H1 (cell line): ENCODE measurements at regions of chr15 and their contacts with region 1.

Region 1: GRCh38 chr15:39686000-39686613 is 96.5 kb downstream of the FSIP1 start:
- DNase-seq: no peak
- H3K4me3 ChIP-seq: no peak overlapping the region
- H3K27ac ChIP-seq: no peak overlapping the region
- H3K4me1 ChIP-seq: no peaks in the 10 kb centered on the region
- H3K27me3 ChIP-seq: no peaks in the 10 kb centered on the region
- CTCF ChIP-seq: peak in 2 of 3 experiments; percentile 69 to 77; a peak in 3 of 4 replicates
- EP300 ChIP-seq: no peak
- POLR2A ChIP-seq: no peak
- RAD21 ChIP-seq: peak; percentile 95

Region 2: GRCh38 chr15:39672666-39673065 is 13.4 kb before region 1 on chr15:
- CTCF ChIA-PET with region 1: interaction called, 11 read pairs
- POLR2A ChIA-PET with region 1: no interaction called
- DNase-seq: no peak
- H3K4me3 ChIP-seq: no peak overlapping the region
- H3K27ac ChIP-seq: no peak overlapping the region
- H3K4me1 ChIP-seq: peaks cover 0 to 2% (median 0%) of the 10 kb centered on the region in 4 experiments; a peak in 2 of 7 replicates
- H3K27me3 ChIP-seq: no peaks in the 10 kb centered on the region
- CTCF ChIP-seq: no peak
- EP300 ChIP-seq: no peak
- POLR2A ChIP-seq: no peak
- RAD21 ChIP-seq: no peak

Region 3: DNA sequence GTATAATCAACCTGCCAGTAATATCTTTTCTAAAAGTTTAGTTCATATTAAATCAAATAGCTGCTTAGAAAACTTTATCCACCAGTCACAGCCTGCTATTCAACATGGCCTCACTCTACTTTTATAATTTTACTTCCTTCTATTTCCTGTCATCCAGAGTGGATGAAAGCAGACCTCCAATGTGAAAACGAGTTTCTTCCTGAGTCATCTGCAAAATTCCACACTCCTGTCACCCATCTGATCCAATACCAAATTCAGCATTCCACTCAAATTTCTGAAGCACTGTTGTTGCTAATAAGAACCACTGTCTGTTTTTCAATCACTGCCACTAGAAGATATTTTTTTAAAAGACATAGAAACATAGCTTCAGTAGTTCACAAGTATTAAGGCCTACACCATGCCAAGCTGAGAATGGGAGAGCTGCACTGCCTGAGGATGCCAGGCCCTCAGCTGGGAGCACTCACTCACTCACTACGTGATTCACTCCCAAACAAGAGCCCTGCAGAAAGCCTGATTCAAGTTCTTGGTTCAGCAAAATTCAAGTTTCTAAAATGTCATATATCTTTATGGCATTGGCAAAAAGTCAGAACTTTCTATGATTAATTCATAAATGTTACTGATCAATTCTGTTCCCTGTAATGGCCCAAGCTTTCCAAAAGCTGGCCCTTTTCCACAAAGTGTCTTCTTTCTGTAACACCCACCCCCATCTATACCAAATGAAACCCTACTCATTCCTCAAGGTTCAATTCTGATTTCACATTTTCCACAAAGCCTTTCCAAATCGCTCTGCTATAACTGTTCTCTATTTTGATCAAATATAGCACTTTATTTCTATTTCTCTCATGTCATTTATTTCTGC is 13.6 kb after region 1 on chr15:
- CTCF ChIA-PET with region 1: interaction called, 17 read pairs
- POLR2A ChIA-PET with region 1: no interaction called
- DNase-seq: no peak
- H3K4me3 ChIP-seq: no peak overlapping the region
- H3K27ac ChIP-seq: no peak overlapping the region
- H3K4me1 ChIP-seq: peaks cover 0 to 4% (median 3%) of the 10 kb centered on the region in 4 experiments; a peak in 3 of 7 replicates
- H3K27me3 ChIP-seq: peaks cover 0 to 1% (median 0%) of the 10 kb centered on the region in 4 experiments; a peak in 1 of 7 replicates
- CTCF ChIP-seq: no peak
- EP300 ChIP-seq: no peak
- POLR2A ChIP-seq: no peak
- RAD21 ChIP-seq: no peak

Region 4: DNA sequence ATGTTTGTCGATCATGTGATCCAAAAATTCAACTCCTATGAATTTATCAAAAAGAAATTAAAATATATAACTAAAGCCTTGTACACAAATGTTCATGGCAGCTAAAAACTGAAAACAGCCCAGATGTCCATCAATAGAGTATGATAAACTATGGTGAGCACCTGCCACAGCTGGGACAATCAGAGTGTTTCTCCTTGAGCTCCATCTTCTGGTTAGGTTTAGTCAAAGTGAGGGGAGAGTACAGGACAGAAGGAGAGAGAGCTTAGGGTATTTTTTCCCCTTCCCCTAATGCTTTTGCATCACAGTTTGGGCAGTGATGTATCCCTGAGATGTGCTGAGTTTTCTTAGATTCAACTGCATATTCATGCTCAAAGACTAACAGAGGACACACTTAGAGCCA is 31.0 kb after region 1 on chr15:
- CTCF ChIA-PET with region 1: interaction called, 14 read pairs
- POLR2A ChIA-PET with region 1: no interaction called
- DNase-seq: no peak
- H3K4me3 ChIP-seq: no peak overlapping the region
- H3K27ac ChIP-seq: no peak overlapping the region
- H3K4me1 ChIP-seq: no peaks in the 10 kb centered on the region
- H3K27me3 ChIP-seq: no peaks in the 10 kb centered on the region
- CTCF ChIP-seq: no peak
- EP300 ChIP-seq: no peak
- POLR2A ChIP-seq: no peak
- RAD21 ChIP-seq: no peak